Mammary epithelial cell (primary cell): ENCODE measurements at regions of chr10 and their contacts with region 1.

Region 1: GRCh38 chr10:93437088-93437945 is 44.8 kb downstream of the MYOF start:
- DNase-seq: peak; percentile 97
- H3K4me3 ChIP-seq: peak overlapping the region in 1 of 3 experiments; percentile 18
- H3K27ac ChIP-seq: peak overlapping the region; percentile 99
- H3K4me1 ChIP-seq: peaks cover 65% of the 10 kb centered on the region
- H3K27me3 ChIP-seq: no peaks in the 10 kb centered on the region
- CTCF ChIP-seq: no peak

Region 2: DNA sequence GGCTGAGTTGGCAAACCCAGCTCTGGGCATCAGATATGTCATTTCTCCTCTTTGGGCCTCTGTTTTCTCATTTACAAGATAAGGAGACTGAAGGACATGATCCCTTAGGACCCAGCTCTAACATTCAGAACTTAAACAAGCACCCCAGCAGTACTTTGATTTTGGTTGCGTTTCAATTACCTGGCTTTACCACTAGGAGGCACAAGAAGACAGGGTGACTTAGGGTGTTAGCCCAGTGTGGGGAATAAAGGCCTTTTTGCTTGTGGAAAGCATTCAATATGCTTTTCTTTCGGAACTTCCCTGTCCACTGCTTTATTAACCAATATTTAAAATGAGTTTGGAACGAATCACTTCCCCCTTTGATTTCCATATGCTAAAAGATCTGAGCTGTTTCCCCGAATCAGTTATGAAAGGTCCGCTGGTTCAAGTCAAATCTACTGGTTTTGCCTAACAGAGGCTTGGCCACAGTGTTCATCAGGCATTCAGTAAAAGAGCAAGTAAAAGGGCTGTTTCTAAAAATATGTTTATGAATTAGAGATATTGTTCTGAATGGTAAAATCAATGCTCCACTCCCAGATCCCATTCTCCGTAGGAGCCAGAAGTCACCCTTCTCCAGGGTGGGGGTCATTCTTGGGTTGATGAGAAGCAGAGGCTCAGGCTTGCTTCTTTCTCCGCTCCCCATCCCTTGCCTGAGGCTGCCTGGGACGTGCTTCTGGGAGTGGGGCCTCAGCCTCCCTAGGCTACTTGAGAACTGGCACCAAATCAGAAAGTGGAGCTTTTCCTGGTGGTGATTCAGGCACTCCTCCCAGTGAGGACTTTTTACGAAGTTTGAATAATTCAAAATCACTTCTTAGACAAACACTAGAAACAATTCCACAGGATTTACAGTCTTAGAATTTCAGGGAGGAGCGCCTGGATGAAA is 60.7 kb before region 1 on chr10:
- CTCF ChIA-PET with region 1: no interaction called
- dilution Hi-C with region 1: no loop called
- in situ Hi-C with region 1: no loop called
- intact Hi-C with region 1: loop called (anchors 2 kb)
- DNase-seq: peak; percentile 81
- H3K4me3 ChIP-seq: no peak overlapping the region
- H3K27ac ChIP-seq: peak overlapping the region; percentile 95
- H3K4me1 ChIP-seq: peaks cover 46% of the 10 kb centered on the region
- H3K27me3 ChIP-seq: no peaks in the 10 kb centered on the region
- CTCF ChIP-seq: peak; percentile 93 to 95

Region 3: DNA sequence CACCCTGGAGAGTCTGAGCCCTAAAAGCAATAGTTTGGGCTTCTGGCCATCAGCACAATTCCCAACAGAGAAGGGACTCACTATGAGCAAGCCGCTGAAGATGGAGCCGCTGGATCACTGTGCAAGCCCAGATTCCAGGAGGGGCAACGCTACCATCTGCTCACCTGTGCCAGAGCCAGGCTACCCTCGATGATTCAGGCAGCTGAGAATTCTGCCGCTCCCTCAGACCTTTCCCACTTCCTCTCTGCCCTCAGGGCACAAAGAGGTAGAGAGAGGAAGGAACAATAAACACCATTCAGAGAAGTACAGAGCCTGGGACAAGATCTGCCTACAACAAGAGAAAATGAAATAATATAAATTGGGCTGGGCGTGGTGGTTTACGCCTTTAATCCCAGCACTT is 53.3 kb before region 1 on chr10:
- CTCF ChIA-PET with region 1: no interaction called
- dilution Hi-C with region 1: no loop called
- in situ Hi-C with region 1: no loop called
- intact Hi-C with region 1: loop called (anchors 1 kb)
- DNase-seq: peak; percentile 100
- H3K4me3 ChIP-seq: peak overlapping the region in 1 of 3 experiments; percentile 14
- H3K27ac ChIP-seq: peak overlapping the region; percentile 98
- H3K4me1 ChIP-seq: peaks cover 37% of the 10 kb centered on the region
- H3K27me3 ChIP-seq: no peaks in the 10 kb centered on the region
- CTCF ChIP-seq: no peak

Region 4: GRCh38 chr10:93458821-93459257 is 21.5 kb after region 1 on chr10:
- CTCF ChIA-PET with region 1: no interaction called
- dilution Hi-C with region 1: no loop called
- in situ Hi-C with region 1: no loop called
- intact Hi-C with region 1: loop called (anchors 1 kb)
- DNase-seq: peak; percentile 97
- H3K4me3 ChIP-seq: peak overlapping the region in 1 of 3 experiments; percentile 21
- H3K27ac ChIP-seq: peak overlapping the region; percentile 93
- H3K4me1 ChIP-seq: peaks cover 49% of the 10 kb centered on the region
- H3K27me3 ChIP-seq: no peaks in the 10 kb centered on the region
- CTCF ChIP-seq: no peak

Region 5: DNA sequence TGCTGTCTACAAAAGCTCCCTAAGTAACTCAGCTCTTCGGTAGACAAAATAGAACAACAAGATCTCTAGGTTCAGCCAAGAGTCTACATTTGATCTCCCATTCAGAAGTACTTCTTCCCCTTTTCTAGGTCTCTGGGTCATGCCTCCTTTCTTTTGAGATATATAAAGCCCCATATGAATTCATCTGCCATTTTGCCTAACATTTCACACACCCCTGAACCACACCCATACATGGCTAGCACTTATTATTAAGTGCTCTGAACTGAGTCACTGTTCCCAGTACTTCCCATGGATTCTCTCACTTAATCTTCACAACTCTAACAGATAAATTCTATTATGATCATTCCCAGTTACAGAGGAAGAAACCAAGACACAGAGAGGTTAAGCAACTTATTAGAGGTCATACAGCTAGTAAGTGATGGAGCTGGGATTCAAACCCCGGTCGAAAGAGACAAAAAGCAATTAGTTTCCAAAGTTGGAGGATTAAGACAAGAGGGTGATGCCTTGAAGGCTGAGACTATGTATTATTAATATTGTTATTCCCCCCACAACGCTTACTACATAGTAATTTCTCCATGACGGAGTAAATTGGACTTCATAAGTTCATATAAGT is 27.6 kb after region 1 on chr10:
- CTCF ChIA-PET with region 1: no interaction called
- dilution Hi-C with region 1: no loop called
- in situ Hi-C with region 1: no loop called
- intact Hi-C with region 1: loop called (anchors 1 kb)
- DNase-seq: no peak
- H3K4me3 ChIP-seq: no peak overlapping the region
- H3K27ac ChIP-seq: peak overlapping the region; percentile 95
- H3K4me1 ChIP-seq: peaks cover 78% of the 10 kb centered on the region
- H3K27me3 ChIP-seq: no peaks in the 10 kb centered on the region
- CTCF ChIP-seq: no peak